Activated CD8-positive, alpha-beta T cell treated with anti-CD3 and anti-CD28 coated beads, Interleukin-2, amount 10 ng/mL, durations not matched to agents 7 days and 5 days (primary cell): ENCODE measurements at regions of chr3 and their contacts with region 1.

Region 1: GRCh38 chr3:50611464-50612233 is at the start of gene CISH:
- DNase-seq: peak; percentile 99
- ATAC-seq: peak; percentile 73
- H3K4me3 Mint-ChIP-seq: peak within 1 kb of the TSS; percentile 94
- H3K27ac Mint-ChIP-seq: peak within 1 kb of the TSS; percentile 97
- H3K4me1 Mint-ChIP-seq: peaks cover 31% of the 10 kb centered on the region
- H3K27me3 Mint-ChIP-seq: no peaks in the 10 kb centered on the region
- total RNA-seq, gene CISH: 380 to 394 TPM

Region 2: DNA sequence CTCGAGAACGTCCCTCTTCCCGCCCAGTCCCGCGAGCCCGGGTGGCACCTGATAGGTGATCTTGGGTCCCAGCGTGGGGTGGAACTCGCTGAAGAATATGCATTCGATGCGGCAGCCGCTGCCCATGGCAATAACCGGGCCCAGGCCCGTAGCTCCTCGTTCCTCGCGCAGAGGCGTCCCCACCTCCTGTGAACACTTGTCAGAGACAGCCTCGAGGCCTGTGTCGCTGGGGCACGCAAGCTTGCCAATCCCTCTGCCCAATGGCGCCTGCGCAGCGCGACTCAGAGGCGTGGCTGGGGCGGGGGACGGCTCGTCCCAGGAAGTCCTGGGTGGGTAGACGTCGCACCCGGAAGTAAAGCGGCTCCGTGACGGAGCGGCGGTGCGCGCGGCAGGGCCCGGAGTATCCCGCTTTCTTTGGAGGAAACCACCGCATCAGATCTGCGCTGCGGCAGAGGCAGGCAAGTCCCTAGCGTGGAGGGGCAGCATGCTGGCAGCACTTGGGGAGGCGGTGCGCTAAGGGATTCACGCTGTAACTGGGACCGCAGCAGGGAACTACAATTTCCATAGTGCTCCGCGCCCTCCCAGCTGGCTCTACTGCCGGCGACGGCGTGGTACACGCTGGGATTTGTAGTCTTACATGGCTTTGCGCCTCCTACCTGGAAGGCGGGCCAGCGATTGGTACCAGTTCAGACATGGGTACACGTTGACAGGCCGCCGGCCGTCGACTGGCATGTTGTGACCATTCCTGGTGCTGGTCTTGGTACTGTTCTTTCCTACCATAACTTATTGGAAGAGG is 260.9 kb before region 1 on chr3 and contains the starts of genes CYB561D2 and NPRL2:
- CTCF ChIA-PET with region 1: interaction called, 3 read pairs
- POLR2A ChIA-PET with region 1: interaction called, 13 read pairs
- DNase-seq: peak; percentile 99
- ATAC-seq: peak; percentile 92
- H3K4me3 Mint-ChIP-seq: peak within 1 kb of the TSS; percentile 96
- H3K27ac Mint-ChIP-seq: peak within 1 kb of the TSS; percentile 99
- H3K4me1 Mint-ChIP-seq: peaks cover 68% of the 10 kb centered on the region
- H3K27me3 Mint-ChIP-seq: no peaks in the 10 kb centered on the region
- total RNA-seq, gene CYB561D2: 42.5 to 43.6 TPM
- total RNA-seq, gene NPRL2: 59.8 to 60.3 TPM

Region 3: DNA sequence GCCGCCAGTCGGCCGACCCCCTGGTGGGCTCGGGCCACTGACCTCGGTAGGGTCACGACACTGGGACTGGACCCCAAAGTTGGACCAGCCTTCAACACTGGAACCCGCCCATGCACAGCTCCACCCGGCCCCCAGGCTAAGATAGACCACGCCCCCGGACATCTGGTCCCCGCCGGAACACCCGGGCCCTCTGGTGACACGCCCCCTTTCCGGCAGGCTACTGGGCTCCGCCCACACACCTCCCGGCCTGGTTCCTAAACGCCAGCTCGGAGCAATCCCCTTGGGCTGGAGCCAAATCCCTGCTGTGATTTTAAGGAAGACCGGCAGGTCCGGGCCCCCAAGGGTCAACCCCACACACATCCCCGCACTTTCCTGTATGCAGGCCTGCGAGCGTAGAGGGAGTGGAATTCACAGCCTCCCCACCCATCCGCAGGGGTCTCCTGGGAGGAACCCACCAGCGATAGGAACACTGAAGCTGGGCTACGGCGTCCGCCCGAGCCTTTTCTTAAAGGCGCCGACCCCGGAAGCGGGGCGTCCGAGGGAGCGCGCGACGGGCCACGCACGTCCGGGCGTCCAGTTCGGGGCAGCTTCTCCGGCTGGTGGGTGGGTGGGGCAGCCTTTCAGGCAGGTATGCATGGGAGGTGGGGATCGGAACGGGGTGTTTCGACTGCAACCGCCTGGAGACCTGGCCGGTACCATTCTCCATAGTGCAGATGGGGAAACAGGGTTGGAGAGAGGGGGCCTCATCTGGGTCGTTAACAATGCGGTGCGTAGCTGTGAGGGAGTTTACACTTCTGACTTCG is 42.5 kb before region 1 on chr3 and contains the start of gene HEMK1:
- CTCF ChIA-PET with region 1: interaction called, 1,321 read pairs
- POLR2A ChIA-PET with region 1: interaction called, 1,664 read pairs
- DNase-seq: peak; percentile 98
- ATAC-seq: peak; percentile 46
- H3K4me3 Mint-ChIP-seq: peak within 1 kb of the TSS; percentile 95
- H3K27ac Mint-ChIP-seq: peak within 1 kb of the TSS; percentile 97
- H3K4me1 Mint-ChIP-seq: peaks cover 79% of the 10 kb centered on the region
- H3K27me3 Mint-ChIP-seq: peaks cover 2% of the 10 kb centered on the region
- total RNA-seq, gene HEMK1: 83.3 to 86.0 TPM

Region 4: DNA sequence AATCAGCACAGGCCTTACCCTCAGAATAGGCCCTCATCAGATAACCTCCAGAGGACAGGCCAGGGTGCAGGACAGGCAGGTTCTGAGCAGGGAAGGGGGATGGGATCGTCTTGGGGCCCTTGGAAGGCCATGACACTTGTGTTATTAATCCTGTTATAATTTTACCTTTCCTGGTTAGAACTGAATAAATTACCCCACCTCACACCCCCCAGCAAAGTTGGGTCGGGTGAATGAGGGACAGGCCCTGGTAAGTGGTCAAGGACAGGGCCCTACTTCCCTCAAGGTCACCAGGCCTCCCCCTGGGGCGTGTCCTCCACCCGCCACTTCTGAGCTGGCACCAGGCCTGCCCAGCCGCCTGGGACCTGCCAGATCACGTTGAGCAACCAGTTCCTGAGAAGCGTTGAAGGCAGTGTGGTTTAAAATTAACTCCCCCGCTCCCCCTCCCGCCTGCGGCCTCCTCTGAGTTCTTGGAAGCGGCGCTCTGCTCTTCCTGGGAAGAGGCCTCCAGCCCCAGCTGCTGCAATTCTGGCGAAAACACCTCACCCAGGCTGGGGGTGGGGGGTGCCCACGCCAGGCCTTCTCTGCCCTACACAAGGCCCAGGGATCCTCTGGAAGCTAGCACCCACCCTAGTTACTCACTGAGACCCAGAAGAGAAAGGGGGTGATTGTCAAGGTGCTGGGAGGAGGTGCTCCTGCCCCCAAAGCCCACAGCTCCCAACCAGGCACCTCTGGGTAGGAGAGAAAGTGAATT is 10.6 kb before region 1 on chr3:
- CTCF ChIA-PET with region 1: interaction called, 94 read pairs
- POLR2A ChIA-PET with region 1: interaction called, 398 read pairs
- DNase-seq: peak; percentile 91
- ATAC-seq: peak; percentile 61
- H3K4me3 Mint-ChIP-seq: peak overlapping the region; percentile 94
- H3K27ac Mint-ChIP-seq: peak overlapping the region; percentile 97
- H3K4me1 Mint-ChIP-seq: peaks cover 89% of the 10 kb centered on the region
- H3K27me3 Mint-ChIP-seq: no peaks in the 10 kb centered on the region

Region 5: GRCh38 chr3:50674349-50675178 is 62.9 kb after region 1 on chr3 and contains the start of gene DOCK3:
- CTCF ChIA-PET with region 1: interaction called, 80 read pairs
- POLR2A ChIA-PET with region 1: no interaction called
- DNase-seq: peak; percentile 64
- ATAC-seq: peak; percentile 91
- H3K4me3 Mint-ChIP-seq: peak within 1 kb of the TSS; percentile 68
- H3K27ac Mint-ChIP-seq: peak within 1 kb of the TSS; percentile 62
- H3K4me1 Mint-ChIP-seq: peaks cover 8% of the 10 kb centered on the region
- H3K27me3 Mint-ChIP-seq: peaks cover 42% of the 10 kb centered on the region
- total RNA-seq, gene DOCK3: 3.2 to 3.4 TPM

Region 6: GRCh38 chr3:50734985-50735384 is 123.3 kb after region 1 on chr3:
- CTCF ChIA-PET with region 1: no interaction called
- POLR2A ChIA-PET with region 1: no interaction called
- DNase-seq: no peak
- ATAC-seq: no peak
- H3K4me3 Mint-ChIP-seq: no peak overlapping the region
- H3K27ac Mint-ChIP-seq: no peak overlapping the region
- H3K4me1 Mint-ChIP-seq: no peaks in the 10 kb centered on the region
- H3K27me3 Mint-ChIP-seq: no peaks in the 10 kb centered on the region

Region 7: DNA sequence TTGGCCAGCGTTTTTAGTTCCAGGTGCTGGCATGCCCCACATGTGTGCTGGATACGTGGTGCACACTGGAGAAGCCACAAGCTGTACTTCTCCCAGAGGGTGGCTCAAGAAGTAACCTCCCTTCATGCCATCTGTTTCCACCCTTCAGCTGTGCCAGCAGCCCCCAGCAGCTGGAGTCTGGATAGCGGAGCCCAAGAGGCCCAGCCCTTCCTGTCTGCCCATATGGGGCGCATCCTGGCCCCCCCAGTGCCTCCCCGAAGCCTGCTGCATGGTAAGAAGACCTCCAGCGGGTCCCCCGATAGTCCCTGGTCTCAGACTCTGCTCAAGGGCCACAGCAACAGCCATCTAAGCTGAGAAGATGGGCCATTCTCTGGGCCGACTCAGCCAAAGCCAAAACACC is 767.7 kb after region 1 on chr3:
- CTCF ChIA-PET with region 1: interaction called, 106 read pairs
- POLR2A ChIA-PET with region 1: interaction called, 3 read pairs
- DNase-seq: no peak
- ATAC-seq: no peak
- H3K4me3 Mint-ChIP-seq: no peak overlapping the region
- H3K27ac Mint-ChIP-seq: peak overlapping the region; percentile 72
- H3K4me1 Mint-ChIP-seq: peaks cover 27% of the 10 kb centered on the region
- H3K27me3 Mint-ChIP-seq: no peaks in the 10 kb centered on the region